Mammary epithelial cell (primary cell): ENCODE measurements at regions of chr12 and their contacts with region 1.

Region 1: DNA sequence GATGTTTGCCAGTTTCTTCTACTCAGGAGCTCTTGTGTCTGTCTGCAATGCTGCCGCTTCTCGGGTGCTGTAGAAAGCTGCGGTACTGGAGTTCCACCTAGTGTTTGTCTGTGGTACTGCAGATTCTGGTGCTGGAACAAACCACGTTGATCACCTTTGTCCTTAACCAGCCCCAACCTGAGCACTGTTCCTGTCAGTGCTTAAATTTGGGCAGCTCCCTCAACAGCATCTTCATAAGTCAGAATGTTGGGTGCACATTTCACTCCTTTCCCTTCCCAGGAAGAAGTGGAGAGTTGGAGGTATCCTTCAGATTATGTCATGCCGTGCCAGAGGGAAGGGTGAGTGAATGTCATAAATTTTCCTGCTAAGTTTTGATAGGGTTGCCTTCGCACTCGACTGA is 48.7 kb upstream of the LALBA start:
- DNase-seq: peak; percentile 60
- H3K4me3 ChIP-seq: no peak overlapping the region
- H3K27ac ChIP-seq: no peak overlapping the region
- H3K4me1 ChIP-seq: no peaks in the 10 kb centered on the region
- H3K27me3 ChIP-seq: no peaks in the 10 kb centered on the region
- CTCF ChIP-seq: peak; percentile 99 to 100

Region 2: GRCh38 chr12:48197971-48198671 is 420.4 kb before region 1 on chr12:
- CTCF ChIA-PET with region 1: no interaction called
- dilution Hi-C with region 1: no loop called
- in situ Hi-C with region 1: loop called in 1 of 2 experiments (anchors 25 kb)
- intact Hi-C with region 1: loop called (anchors 5 kb)
- DNase-seq: peak; percentile 92
- H3K4me3 ChIP-seq: peak overlapping the region; percentile 49 to 70 (median 61)
- H3K27ac ChIP-seq: peak overlapping the region; percentile 74
- H3K4me1 ChIP-seq: peaks cover 15% of the 10 kb centered on the region
- H3K27me3 ChIP-seq: no peaks in the 10 kb centered on the region
- CTCF ChIP-seq: no peak

Region 3: GRCh38 chr12:48542300-48542928 is 76.1 kb before region 1 on chr12:
- CTCF ChIA-PET with region 1: interaction called, 14 read pairs
- dilution Hi-C with region 1: no loop called
- in situ Hi-C with region 1: loop called (anchors 5 kb)
- intact Hi-C with region 1: loop called (anchors 1 kb)
- DNase-seq: peak; percentile 42
- H3K4me3 ChIP-seq: no peak overlapping the region
- H3K27ac ChIP-seq: no peak overlapping the region
- H3K4me1 ChIP-seq: peaks cover 8% of the 10 kb centered on the region
- H3K27me3 ChIP-seq: no peaks in the 10 kb centered on the region
- CTCF ChIP-seq: peak; percentile 90 to 93